Breast epithelium (tissue), 4 donors: ENCODE measurements at regions of chr6 and their contacts with region 1.

Region 1: GRCh38 chr6:139508023-139508422 is 133.6 kb upstream of the CITED2 start:
- DNase-seq: no peak
- H3K4me3 ChIP-seq: no peak overlapping the region
- H3K27ac ChIP-seq: no peak overlapping the region
- H3K4me1 ChIP-seq: no peaks in the 10 kb centered on the region
- H3K27me3 ChIP-seq: no peaks in the 10 kb centered on the region
- CTCF ChIP-seq: no peak
- POLR2A ChIP-seq: no peak

Region 2: DNA sequence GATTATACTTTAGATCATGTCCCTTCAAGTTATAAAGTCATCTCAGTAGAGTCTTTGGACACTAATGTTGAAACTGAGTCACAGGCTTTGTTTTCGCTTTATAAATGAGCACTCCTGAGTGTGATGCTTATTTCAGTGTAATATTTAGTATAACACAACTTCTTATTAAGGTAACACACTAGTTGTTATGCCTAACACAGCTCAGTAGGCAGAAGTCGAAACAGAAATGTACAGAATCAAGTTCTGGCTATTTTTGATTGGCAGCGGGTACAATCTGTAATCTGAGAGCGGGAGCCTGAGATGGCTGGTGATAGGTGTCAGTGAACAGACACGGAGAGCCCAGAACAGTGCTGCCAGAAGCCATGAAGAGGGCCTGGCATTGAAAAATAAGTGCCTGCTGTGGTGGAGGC is 361.7 kb before region 1 on chr6:
- intact Hi-C with region 1: no loop called
- DNase-seq: no peak
- H3K4me3 ChIP-seq: no peak overlapping the region
- H3K27ac ChIP-seq: no peak overlapping the region
- H3K4me1 ChIP-seq: no peaks in the 10 kb centered on the region
- H3K27me3 ChIP-seq: no peaks in the 10 kb centered on the region
- CTCF ChIP-seq: no peak
- POLR2A ChIP-seq: no peak

Region 3: GRCh38 chr6:139553916-139554315 is 45.9 kb after region 1 on chr6:
- intact Hi-C with region 1: loop called (anchors 2 kb)
- DNase-seq: no peak
- H3K4me3 ChIP-seq: no peak overlapping the region
- H3K27ac ChIP-seq: no peak overlapping the region
- H3K4me1 ChIP-seq: no peaks in the 10 kb centered on the region
- H3K27me3 ChIP-seq: no peaks in the 10 kb centered on the region
- CTCF ChIP-seq: no peak
- POLR2A ChIP-seq: no peak